Calu3 (cell line): ENCODE measurements at regions of chr20 and their contacts with region 1.

Region 1: GRCh38 chr20:35146920-35147574 is at the start of gene EDEM2:
- DNase-seq: peak; percentile 98
- H3K4me3 Mint-ChIP-seq: peak within 1 kb of the TSS; percentile 87
- H3K27ac Mint-ChIP-seq: peak within 1 kb of the TSS; percentile 78
- H3K4me1 Mint-ChIP-seq: peaks cover 25% of the 10 kb centered on the region
- H3K27me3 Mint-ChIP-seq: no peaks in the 10 kb centered on the region
- CTCF ChIP-seq: no peak
- total RNA-seq, gene EDEM2: 44.4 and 49.4 TPM in 2 replicates

Region 2: GRCh38 chr20:35079472-35080347 is 67.3 kb before region 1 on chr20:
- CTCF ChIA-PET with region 1: no interaction called
- intact Hi-C with region 1: no loop called
- DNase-seq: no peak
- H3K4me3 Mint-ChIP-seq: no peak overlapping the region
- H3K27ac Mint-ChIP-seq: no peak overlapping the region
- H3K4me1 Mint-ChIP-seq: no peaks in the 10 kb centered on the region
- H3K27me3 Mint-ChIP-seq: no peaks in the 10 kb centered on the region
- CTCF ChIP-seq: no peak

Region 3: GRCh38 chr20:35092524-35093266 is 54.4 kb before region 1 on chr20 and contains the start of gene TRPC4AP:
- CTCF ChIA-PET with region 1: interaction called, 40 read pairs
- intact Hi-C with region 1: no loop called
- DNase-seq: peak; percentile 95
- H3K4me3 Mint-ChIP-seq: peak within 1 kb of the TSS; percentile 75
- H3K27ac Mint-ChIP-seq: peak within 1 kb of the TSS; percentile 93
- H3K4me1 Mint-ChIP-seq: peaks cover 31% of the 10 kb centered on the region
- H3K27me3 Mint-ChIP-seq: no peaks in the 10 kb centered on the region
- CTCF ChIP-seq: peak; percentile 98
- total RNA-seq, gene TRPC4AP: 79.0 and 85.3 TPM in 2 replicates

Region 4: GRCh38 chr20:35207950-35208611 is 61.0 kb after region 1 on chr20:
- CTCF ChIA-PET with region 1: interaction called, 86 read pairs
- intact Hi-C with region 1: loop called (anchors 1 kb)
- DNase-seq: peak; percentile 93
- H3K4me3 Mint-ChIP-seq: no peak overlapping the region
- H3K27ac Mint-ChIP-seq: no peak overlapping the region
- H3K4me1 Mint-ChIP-seq: peaks cover 8% of the 10 kb centered on the region
- H3K27me3 Mint-ChIP-seq: no peaks in the 10 kb centered on the region
- CTCF ChIP-seq: peak; percentile 77

Region 5: DNA sequence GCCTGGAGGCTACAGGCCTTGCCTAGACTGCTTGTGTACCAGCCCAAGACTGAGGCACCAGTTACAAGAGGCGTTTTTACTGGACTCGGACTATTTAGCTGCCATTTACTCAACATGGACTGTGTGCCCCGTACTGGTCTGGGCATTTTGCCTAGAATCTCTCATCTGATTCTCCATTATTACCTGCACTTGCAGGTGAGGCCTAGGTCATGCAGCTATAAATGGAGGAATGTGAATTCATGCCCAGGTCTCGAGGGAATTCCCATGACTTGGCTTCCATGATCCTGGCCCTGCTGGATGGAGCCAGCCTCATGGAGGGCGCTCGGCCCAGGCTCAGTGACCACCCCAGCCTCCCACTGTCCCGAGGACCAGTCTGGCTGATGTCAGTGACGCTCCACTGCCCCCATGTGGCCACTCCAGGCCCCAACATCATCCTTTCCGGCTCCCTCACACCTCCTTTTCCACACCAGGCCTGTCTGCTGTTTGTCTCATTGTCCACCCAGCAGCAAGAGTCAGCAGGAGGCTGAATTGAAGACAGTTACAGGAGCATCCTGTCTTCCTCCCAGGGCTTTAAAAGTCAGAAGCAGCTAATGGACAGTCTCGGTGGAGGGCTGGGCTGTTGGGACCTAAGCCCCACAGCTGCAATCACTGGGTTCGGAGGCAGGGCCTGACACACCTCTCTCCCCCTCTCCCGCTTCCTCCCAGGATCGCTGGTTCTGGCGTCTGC is 122.2 kb after region 1 on chr20:
- CTCF ChIA-PET with region 1: interaction called, 85 read pairs
- intact Hi-C with region 1: loop called (anchors 2 kb)
- DNase-seq: peak; percentile 90
- H3K4me3 Mint-ChIP-seq: no peak overlapping the region
- H3K27ac Mint-ChIP-seq: peak overlapping the region; percentile 19
- H3K4me1 Mint-ChIP-seq: peaks cover 25% of the 10 kb centered on the region
- H3K27me3 Mint-ChIP-seq: no peaks in the 10 kb centered on the region
- CTCF ChIP-seq: peak; percentile 90

Region 6: DNA sequence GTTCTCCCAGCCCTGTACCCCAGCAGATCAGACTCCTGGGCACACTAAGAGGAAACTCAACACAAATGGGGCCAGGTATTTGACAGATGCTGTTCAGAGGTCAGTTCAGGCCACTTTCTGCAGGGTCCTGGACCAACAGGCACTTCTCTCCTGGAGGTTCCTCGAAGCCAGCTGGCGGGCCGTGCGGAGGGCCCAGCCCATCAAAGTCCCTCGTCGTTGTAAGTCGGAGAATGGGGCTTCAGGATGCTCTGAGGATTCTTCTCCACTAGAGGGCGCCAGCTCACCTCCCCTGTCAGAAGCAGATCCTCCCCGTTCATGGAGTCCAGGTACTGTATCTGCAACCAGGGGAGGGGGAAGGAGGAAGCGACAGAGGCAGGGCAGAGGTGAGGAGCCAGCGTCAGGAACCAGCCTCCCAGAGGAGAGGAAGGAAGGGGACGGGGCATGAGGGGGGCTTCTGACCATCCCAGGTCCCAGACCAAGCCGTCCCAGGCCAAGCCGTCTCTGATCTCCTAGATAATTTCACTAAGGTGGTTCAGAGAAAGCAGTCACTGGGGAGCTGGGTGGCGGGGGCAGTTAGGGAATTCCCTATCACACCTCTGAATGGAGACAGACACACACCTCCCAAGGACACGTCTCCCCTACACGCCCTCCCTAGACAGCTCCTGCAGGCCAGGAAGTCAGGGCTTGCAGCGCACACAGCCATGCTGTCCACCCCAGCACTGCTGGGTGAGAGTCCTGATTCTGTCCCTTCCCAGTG is 156.9 kb after region 1 on chr20:
- CTCF ChIA-PET with region 1: interaction called, 25 read pairs
- intact Hi-C with region 1: no loop called
- DNase-seq: peak; percentile 95
- H3K4me3 Mint-ChIP-seq: peak overlapping the region; percentile 2
- H3K27ac Mint-ChIP-seq: peak overlapping the region; percentile 88
- H3K4me1 Mint-ChIP-seq: peaks cover 84% of the 10 kb centered on the region
- H3K27me3 Mint-ChIP-seq: no peaks in the 10 kb centered on the region
- CTCF ChIP-seq: peak; percentile 97